GM18951 (cell line): ENCODE measurements at regions of chr22 and their contacts with region 1.

Region 1: GRCh38 chr22:40346178-40347118 is at the start of gene ADSL:
- POLR2A ChIP-seq: peak; percentile 99

Region 2: DNA sequence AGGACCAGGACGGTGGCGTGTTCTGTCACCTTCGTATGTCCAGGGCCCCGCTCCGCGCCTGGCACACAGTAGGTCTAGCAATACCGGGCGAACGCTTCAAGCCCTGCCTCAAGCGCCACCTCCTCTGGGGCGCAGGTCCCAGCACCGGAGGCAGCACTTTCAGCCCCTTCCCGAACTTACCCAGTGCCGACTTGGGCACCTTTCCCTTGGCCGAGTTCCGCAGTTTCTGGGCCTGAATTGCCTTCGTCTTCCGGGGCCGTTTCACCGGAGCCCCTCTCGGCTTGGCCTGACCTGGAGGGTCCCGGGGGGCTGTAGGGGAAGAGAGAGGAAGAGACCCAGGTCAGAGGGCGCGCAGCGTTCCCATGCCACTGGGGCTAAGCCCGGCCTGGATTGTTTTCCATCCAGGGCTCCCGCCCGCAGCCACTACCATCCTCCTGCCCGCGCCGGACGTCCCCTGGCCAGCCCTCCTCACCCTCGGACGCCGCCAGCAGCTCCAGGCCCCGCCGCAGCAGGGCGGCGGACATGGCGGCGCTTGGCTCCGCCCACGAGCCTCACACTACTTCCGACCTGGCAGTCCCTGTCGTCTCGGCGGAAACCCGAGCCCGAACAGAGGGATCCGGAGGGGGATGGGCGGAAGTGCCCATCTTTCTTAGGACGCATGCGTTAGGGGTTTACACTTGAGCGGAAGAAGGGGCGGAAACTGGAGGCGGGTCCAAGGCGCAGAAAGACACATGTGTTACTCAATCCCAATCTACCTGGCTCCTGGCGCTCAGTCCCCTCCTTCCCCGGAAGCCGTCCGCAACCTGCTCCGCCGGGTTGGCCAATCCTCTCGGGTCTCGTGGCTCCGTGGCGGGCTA is 814.0 kb before region 1 on chr22 and contains the start of gene RPS19BP1:
- in situ Hi-C with region 1: loop called (anchors 25 kb)
- POLR2A ChIP-seq: peak; percentile 99

Region 3: DNA sequence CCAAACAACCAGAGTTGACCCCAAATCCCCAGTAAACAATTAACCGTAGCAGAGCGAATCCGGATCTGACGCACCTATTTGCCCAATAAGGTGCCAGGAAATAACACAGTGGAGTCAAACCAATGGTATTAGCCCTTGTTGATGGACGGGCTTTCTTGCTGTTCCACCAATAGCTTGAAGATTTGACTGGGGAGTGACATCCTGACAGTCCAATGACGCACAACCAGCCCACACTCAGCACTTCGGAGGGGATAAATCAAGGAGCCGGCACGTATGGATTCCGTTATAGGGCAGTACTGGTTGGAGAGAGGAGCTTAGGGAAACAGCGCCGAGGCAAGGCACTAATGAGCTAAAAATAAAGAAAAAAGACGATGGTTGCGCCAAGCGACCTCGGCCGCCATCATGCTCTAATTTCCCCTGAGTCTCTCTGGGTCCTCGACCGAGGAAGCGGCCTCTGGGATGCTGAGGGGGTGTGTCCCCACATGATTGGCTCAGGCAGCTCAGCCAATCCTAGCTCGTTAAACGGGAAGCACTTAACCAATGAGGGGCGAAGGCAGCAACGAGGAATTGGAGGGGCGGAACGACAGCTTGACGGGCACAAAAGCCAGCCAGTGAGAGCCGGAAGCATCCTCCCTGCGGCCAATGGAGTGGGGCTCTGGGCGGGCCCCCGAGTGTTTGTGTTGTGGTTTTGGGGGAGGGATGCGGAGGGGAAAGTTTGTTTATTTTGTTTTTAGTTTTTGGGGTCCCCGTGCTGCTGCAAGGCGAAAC is 302.2 kb before region 1 on chr22:
- in situ Hi-C with region 1: loop called (anchors 10 kb)
- POLR2A ChIP-seq: peak; percentile 76

Region 4: DNA sequence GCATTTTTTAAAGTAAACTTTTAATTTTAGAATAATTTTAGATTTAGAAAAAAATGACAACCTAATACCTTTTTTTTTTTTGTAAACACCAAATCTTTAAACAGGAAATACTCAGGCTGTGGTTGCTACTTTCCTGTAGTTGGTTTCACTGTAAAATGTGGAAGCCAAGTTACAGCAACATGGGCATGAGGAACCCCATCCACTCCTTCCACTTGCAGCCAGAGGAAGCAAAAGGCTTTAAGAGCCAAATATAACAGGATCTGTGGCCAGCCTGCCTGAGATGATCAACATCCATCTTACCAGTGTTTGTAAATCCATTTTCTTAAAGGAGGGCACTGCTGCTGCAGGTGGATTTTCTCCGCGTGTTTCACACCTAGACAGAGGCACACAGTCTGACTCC is 102.6 kb before region 1 on chr22:
- in situ Hi-C with region 1: no loop called
- POLR2A ChIP-seq: no peak

Region 5: DNA sequence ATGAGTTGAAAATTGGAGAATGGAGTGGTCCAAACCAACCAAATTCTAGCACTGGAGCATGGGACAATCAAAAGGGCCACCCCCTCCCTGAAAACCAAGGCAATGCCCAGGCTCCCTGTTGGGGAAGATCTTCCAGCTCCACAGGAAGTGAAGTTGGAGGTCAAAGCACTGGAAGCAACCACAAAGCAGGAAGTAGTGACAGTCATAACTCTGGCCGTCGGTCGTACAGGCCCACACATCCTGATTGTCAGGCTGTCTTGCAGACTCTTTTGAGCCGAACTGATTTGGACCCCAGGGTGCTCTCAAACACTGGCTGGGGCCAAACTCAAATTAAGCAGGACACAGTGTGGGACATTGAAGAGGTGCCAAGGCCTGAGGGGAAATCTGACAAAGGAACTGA is 80.7 kb before region 1 on chr22:
- in situ Hi-C with region 1: no loop called
- POLR2A ChIP-seq: no peak